Naive thymus-derived CD4-positive, alpha-beta T cell (primary cell): ENCODE measurements at regions of chr7 and their contacts with region 1.

Region 1: DNA sequence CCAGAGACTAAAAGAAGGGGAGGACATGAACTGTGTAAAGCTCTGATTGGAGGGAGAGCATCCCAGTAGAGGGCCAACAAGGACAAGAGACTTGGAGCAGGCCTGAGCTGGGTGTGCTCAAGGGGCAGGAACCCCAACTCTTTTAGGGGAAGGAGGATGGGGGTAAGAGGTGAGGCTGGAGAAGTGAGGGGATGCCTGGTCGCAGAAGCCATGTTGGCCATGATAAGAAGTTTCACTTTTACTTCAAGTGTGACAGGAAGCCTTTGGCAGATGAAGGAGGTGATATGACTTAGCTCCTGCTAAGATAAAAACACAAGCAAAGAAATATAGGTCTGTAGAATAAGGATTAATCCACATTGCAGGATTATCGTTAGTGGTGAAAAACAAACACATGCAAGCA is 208.3 kb downstream of the JAZF1 start:
- DNase-seq: peak in 6 of 9 donors; percentile 23 to 54 (median 44)
- ATAC-seq: peak; percentile 72
- H3K4me3 ChIP-seq: peak overlapping the region; percentile 44
- H3K4me3 Mint-ChIP-seq: peak overlapping the region; percentile 72 to 89 (median 82)
- H3K27ac ChIP-seq: peak overlapping the region; percentile 2
- H3K27ac Mint-ChIP-seq: peak overlapping the region; percentile 44 to 92 (median 88)
- H3K4me1 ChIP-seq: peaks cover 0 to 16% of the 10 kb centered on the region in 2 donors
- H3K4me1 Mint-ChIP-seq: peaks cover 24 to 39% (median 35%) of the 10 kb centered on the region in 7 donors
- H3K27me3 ChIP-seq: no peaks in the 10 kb centered on the region
- H3K27me3 Mint-ChIP-seq: peaks cover 0 to 4% (median 0%) of the 10 kb centered on the region in 5 donors

Region 2: GRCh38 chr7:27883696-27884095 is 88.6 kb before region 1 on chr7:
- CTCF ChIA-PET with region 1: no interaction called
- POLR2A ChIA-PET with region 1: no interaction called
- intact Hi-C with region 1: no loop called
- DNase-seq: no peak
- ATAC-seq: no peak
- H3K4me3 ChIP-seq: no peak overlapping the region
- H3K4me3 Mint-ChIP-seq: no peak overlapping the region
- H3K27ac ChIP-seq: no peak overlapping the region
- H3K27ac Mint-ChIP-seq: no peak overlapping the region
- H3K4me1 ChIP-seq: no peaks in the 10 kb centered on the region
- H3K4me1 Mint-ChIP-seq: no peaks in the 10 kb centered on the region
- H3K27me3 ChIP-seq: no peaks in the 10 kb centered on the region
- H3K27me3 Mint-ChIP-seq: peaks cover 0 to 8% (median 0%) of the 10 kb centered on the region in 5 donors

Region 3: DNA sequence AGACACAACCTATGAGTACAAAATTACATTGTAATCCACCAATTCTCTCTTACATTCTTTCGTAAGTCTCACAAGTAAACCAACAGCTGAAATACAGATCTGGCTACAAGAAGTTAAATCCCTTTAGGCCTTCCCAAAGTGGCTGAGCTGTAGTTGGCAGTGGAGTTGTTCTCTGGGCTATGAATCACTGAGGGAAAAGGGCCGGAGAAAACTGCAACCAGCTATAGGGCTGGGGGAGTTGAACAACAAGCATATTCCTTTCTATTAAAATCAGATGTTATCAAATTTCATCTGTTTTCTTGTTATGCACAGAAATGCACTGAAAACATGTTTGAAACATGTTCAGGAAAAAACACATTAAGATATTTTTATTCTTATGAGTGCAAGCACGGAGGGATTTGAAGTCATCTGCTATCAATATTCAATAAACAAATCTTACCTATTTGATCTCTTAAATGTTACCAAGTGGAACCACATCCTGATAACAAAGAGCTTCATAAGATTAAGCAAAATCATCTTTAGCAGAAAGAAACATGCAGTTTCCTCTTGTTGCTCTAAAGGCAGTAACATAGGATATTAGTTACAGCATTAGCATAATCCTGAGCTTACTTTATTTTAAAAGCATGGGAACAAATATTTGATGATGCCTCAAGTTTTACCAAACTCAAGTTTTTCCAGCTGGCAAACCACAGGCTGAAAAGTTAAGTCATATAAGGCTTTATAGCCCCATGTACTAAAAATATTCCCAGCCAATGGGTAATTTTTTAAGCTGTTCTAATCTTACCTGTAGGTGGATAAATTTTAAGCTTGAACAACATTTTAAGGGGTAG is 19.6 kb before region 1 on chr7:
- CTCF ChIA-PET with region 1: interaction called, 3 read pairs
- POLR2A ChIA-PET with region 1: interaction called, 10 read pairs
- intact Hi-C with region 1: loop called in 1 of 2 experiments (anchors 1 kb)
- DNase-seq: peak in 6 of 9 donors; percentile 10 to 65 (median 44)
- ATAC-seq: peak; percentile 74
- H3K4me3 ChIP-seq: no peak overlapping the region
- H3K4me3 Mint-ChIP-seq: peak overlapping the region in 9 of 10 donors; percentile 55 to 85 (median 70)
- H3K27ac ChIP-seq: peak overlapping the region; percentile 39
- H3K27ac Mint-ChIP-seq: peak overlapping the region in 8 of 9 donors; percentile 34 to 95 (median 88)
- H3K4me1 ChIP-seq: peaks cover 0 to 32% of the 10 kb centered on the region in 2 donors
- H3K4me1 Mint-ChIP-seq: peaks cover 10 to 64% (median 49%) of the 10 kb centered on the region in 7 donors
- H3K27me3 ChIP-seq: no peaks in the 10 kb centered on the region
- H3K27me3 Mint-ChIP-seq: peaks cover 0 to 4% (median 0%) of the 10 kb centered on the region in 5 donors